ENCODE measurements at regions of chr2 and their contacts with region 1.

Region 1: GRCh38 chr2:74919827-74920226 is 38.6 kb upstream of the POLE4 start:
- H3K4me3 Mint-ChIP-seq: peak overlapping the region; percentile 51
- H3K27ac Mint-ChIP-seq: no peak overlapping the region
- H3K4me1 Mint-ChIP-seq: peaks cover 43% of the 10 kb centered on the region
- H3K27me3 Mint-ChIP-seq: peaks cover 30% of the 10 kb centered on the region

Region 2: DNA sequence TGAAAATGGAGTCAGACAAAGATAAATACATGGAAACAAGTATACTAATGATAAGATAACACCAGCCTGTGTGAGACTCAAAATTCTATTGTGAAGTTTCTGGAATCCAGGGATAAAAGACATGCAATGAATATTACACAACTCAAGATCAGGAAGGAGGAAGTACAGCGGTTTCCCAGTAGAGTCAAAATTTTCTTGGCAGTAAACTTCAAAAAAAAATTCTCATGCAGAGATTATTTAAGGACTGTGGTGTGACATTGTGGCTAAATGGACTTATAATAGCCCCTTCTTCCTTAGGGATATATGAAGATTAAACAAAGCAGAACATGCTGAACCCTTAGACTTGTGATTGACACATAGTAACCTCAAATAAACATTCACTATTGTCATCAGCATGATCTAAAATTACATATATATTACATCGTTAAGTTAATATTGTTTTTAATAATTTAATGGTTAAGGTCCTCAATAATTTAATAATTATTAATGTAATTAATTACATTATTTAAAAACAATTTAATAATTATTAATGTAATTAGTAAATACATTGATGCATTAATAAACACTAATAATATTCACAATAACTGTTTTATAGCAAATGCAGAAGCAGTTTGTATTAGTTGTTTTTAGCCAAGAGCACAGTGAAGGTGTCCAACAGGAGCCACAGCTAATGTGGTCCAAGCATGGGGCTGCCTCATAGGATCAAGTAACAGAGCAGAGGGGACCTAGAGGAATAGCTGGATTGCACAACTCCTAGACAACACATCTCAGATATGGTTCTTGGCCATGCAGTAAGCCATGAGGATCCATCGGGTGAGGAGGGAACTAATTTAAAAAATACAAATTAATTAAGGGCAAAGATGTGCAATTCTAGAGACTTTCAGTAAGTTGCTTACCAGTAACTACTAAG is 115.9 kb after region 1 on chr2:
- intact Hi-C with region 1: loop called (anchors 10 kb)
- H3K4me3 Mint-ChIP-seq: no peak overlapping the region
- H3K27ac Mint-ChIP-seq: no peak overlapping the region
- H3K4me1 Mint-ChIP-seq: peaks cover 11% of the 10 kb centered on the region
- H3K27me3 Mint-ChIP-seq: no peaks in the 10 kb centered on the region

Region 3: GRCh38 chr2:75772908-75773630 is 853.2 kb after region 1 on chr2:
- intact Hi-C with region 1: no loop called
- H3K4me3 Mint-ChIP-seq: no peak overlapping the region
- H3K27ac Mint-ChIP-seq: no peak overlapping the region
- H3K4me1 Mint-ChIP-seq: no peaks in the 10 kb centered on the region
- H3K27me3 Mint-ChIP-seq: peaks cover 3% of the 10 kb centered on the region

Measured in dendritic cell treated with granulocyte-macrophage colony-stimulating factor and Interleukin-4, amounts not matched to agents 40 ng/mL and 50 ng/mL, for 4 days (primary cell).